Left colon (tissue), 2 donors: ENCODE measurements at regions of chr17 and their contacts with region 1.

Region 1: DNA sequence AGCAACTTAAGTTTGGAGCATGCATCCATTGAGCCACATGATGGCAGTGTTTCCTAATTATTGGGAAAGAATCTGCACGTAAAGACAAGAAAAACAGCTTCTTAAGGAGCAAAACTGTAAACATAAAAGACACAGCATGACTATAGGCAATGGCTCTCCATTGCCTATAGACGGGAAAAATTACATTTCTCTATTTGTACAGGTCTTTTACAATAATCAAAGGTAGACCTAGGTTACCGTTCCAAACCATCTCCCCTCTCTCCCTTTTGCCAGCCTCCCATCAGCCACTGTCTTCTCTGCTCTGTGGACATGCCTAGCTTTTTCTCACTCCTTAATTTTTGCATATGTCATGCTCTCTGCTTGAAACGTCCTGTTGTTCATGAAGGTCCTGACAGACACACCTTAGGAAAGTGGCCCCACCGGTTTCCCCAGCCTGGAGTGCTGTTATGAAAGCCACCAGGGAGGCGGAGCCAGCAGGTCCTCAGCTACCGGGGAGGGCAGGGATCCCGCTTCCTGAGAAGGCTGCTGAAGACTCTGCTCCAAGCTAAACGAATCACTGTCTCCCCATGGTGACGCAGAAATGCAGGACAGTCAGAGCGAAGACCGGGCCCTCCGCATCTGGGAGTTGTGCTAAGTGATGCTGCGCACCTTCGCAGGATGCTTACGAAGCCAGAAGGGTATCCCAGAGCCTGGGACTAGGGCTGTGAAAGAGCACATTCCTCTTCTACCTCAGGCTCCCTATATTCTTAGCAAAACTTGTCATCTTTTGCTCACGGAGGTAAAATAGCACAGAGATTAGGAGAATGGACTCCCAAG is 2.2 kb upstream of the SLC16A11 start:
- DNase-seq: peak; percentile 94
- ATAC-seq: peak; percentile 84

Region 2: DNA sequence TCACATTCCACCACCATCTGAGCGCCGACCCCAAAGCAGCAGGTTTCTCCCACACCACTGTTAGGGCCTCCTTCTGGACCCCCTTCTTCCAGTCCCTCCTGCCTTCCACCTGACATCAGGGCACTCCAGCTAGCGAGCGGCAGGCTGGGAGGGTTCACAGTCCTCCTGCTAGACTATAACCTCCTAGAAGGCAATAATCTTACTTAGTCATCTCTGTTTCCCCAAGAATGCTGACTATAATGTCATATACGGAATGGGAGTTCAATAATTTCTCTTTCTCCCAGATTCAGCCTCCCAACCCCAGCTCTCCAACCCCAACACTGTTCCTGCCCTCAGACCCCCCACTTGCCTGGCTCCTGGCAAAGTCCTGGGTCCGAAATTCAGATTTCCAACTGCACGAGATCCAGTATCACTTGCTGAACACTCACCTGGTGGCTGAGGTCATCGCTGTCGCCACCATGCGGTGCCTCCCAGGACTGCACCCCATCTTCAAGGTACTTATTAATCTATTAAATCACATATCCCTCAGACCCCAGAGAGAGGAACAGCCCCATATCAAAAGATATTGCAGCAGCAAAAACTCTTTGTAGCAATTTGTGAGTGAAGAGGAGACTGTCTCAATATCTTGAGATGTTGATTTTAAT is 44.7 kb before region 1 on chr17:
- intact Hi-C with region 1: no loop called
- DNase-seq: peak in 1 of 2 donors; percentile 15
- ATAC-seq: peak; percentile 41

Region 3: DNA sequence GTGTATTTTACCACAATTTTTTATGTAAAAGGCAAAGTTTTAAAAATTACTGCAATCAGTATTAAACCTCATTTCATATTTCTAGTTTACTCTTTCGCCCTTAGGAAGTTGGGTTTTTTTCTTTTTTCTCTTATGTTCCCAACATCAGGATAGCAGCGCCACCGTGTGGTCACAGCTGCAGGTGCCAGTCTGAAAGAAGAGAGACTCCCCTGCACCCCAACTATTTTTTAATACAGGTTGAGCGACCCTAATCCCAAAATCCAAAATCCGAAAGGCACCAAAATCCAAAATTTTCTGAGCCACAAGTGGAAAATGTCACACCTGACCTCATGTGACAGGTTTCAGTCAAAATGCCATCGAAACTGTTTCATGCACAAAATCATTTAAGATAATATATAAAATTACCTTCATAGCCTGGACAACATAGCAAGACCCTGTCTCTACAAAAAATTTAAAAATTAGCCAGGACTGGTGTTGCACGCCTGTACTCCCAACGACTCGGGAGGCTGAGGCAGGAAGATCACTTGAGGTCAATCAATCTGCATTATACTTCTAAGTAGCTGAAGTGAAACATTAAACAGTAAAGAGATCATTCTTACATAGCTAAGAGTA is 90.3 kb after region 1 on chr17:
- intact Hi-C with region 1: loop called in 1 of 2 experiments (anchors 5 kb)
- DNase-seq: peak in 1 of 2 donors; percentile 91
- ATAC-seq: no peak

Region 4: DNA sequence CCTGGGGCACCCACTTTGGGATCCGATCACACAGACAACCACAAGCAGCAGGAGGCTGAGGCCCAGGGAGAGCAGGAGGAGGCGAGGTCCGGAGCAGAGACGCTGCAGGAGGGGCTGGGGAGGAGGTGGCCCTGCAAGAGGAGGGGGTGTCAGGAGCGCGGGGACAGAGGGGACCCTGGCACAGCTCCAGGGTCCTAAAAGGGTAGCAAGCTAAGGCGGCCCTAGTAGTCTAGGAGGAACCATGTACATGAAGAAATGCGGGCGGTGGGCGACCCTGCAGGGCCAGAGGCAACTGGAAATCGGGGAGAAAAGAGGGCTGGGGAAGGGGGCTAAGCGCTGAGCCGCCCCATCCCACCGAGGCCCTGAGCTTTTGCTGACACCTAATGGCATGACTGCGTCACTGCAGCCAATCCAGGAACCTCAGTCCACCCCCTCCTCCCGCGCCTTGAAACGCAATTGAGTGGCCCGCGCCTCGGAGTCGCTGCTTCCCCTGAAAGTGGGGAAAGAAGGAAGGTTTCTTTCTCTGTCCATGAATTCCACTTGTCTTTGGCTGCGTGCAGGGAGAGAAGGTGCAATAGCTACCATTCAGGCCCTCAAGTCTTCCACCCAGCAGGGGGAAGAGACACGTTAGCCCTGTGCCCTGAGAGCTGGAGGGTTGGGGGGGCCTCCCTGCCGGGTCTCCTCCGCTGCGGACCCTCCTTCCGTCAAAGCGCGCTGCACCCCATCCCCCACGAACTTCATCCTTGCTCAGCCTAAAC is 131.3 kb after region 1 on chr17:
- intact Hi-C with region 1: loop called in 1 of 2 experiments (anchors 5 kb)
- DNase-seq: peak; percentile 56 to 73
- ATAC-seq: peak; percentile 81